ENCODE measurements at regions of chr5 and their contacts with region 1.

Region 1: DNA sequence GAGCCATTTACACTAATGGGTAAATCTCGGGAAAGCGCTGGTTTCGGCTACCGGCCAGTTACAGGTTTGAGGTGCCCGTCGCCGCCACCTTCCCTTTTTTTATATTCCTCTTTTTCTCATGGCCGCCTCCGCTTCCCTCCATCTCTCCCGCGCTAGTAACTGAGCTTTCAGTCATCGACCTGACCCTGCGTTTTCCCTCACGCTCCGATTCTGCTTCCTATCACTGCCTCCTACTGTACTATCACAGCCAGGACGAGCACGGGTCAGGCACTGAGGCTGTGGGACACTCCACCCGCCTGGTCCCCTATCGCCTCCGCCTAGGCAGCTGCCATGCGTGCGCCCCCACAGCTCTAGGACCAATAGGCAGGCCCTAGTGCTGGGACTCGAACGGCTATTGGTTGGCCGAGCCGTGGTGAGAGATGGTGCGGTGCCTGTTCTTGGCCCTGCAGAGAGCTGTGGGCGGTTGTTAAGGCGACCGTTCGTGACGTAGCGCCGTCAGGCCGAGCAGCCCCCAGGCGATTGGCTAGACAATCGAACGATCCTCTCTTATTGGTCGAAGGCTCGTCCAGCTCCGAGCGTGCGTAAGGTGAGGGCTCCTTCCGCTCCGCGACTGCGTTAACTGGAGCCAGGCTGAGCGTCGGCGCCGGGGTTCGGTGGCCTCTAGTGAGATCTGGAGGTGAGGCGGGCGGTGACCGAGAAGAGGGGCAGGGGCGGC is at the start of gene HMGCR:
- DNase-seq: peak; percentile 98
- H3K4me3 ChIP-seq: peak within 1 kb of the TSS; percentile 83
- H3K27ac ChIP-seq: peak within 1 kb of the TSS; percentile 78
- H3K4me1 ChIP-seq: peaks cover 47% of the 10 kb centered on the region
- H3K27me3 ChIP-seq: no peaks in the 10 kb centered on the region
- CTCF ChIP-seq: peak; percentile 11; the same call in 1 of the 2 replicates
- total RNA-seq, gene HMGCR: 55.0 and 86.8 TPM in 2 replicates

Region 2: GRCh38 chr5:73962801-73963425 is 1373.9 kb before region 1 on chr5:
- CTCF ChIA-PET with region 1: no interaction called
- POLR2A ChIA-PET with region 1: interaction called, 15 read pairs
- intact Hi-C with region 1: no loop called
- DNase-seq: peak; percentile 62 to 89
- H3K4me3 ChIP-seq: no peak overlapping the region
- H3K27ac ChIP-seq: peak overlapping the region; percentile 62
- H3K4me1 ChIP-seq: peaks cover 6% of the 10 kb centered on the region
- H3K27me3 ChIP-seq: no peaks in the 10 kb centered on the region
- CTCF ChIP-seq: no peak

Region 3: GRCh38 chr5:74766849-74767578 is 569.8 kb before region 1 on chr5 and contains the starts of genes GFM2 and NSA2:
- CTCF ChIA-PET with region 1: interaction called, 15 read pairs
- POLR2A ChIA-PET with region 1: interaction called, 12 read pairs
- intact Hi-C with region 1: no loop called
- DNase-seq: peak; percentile 83 to 88
- H3K4me3 ChIP-seq: peak within 1 kb of the TSS; percentile 83
- H3K27ac ChIP-seq: peak within 1 kb of the TSS; percentile 58
- H3K4me1 ChIP-seq: peaks cover 44% of the 10 kb centered on the region
- H3K27me3 ChIP-seq: no peaks in the 10 kb centered on the region
- CTCF ChIP-seq: no peak; the same call in 1 of the 2 replicates
- total RNA-seq, gene GFM2: 38.5 and 39.8 TPM in 2 replicates
- total RNA-seq, gene NSA2: 47.3 and 87.1 TPM in 2 replicates

Region 4: DNA sequence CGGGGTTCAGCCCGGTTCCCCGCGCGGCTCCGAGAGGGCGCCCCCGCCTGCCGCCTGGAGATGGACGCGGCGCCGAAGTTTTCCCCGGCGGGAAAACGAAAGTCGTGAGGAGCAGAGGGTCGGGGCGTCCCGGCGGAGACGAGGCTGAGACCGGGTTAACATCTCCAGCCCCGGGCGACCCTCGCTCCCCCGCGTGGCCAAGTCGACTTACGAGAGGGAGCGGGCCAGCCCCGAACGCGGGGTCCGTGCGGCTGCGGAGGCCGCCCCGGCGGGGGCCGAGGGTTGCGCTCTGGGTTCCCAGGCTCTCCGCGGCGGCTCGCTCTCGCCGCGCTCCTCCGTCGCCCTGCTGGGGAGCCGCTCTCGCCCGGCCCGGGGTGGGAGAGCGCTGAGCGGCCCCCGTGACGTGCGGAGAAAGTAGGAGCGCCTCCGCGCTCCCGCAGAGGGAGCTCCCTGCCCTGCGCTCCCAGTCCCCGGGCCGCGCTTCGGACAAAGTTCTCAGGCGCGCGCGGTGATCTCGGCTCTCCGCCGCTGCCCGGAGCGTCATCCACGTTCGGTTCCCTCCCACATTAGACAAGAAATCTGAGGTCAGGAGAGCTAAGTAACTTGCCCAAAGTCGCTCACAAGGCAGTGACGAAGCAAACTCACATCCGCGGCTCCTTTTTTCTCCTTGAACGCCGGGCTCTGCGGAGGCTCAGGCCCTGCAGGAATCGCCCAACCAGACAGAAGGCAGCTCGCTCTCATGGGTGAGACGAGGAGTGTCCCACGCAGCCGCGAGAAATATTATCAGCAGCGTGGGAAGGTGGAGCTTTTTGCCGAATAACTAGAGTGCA is 283.3 kb before region 1 on chr5:
- CTCF ChIA-PET with region 1: no interaction called
- POLR2A ChIA-PET with region 1: interaction called, 5 read pairs
- intact Hi-C with region 1: loop called (anchors 2 kb)
- DNase-seq: peak; percentile 60 to 66
- H3K4me3 ChIP-seq: peak overlapping the region; percentile 72
- H3K27ac ChIP-seq: 0 out of 2 replicates have a peak overlapping the region, but pooled peaks have one; percentile 9
- H3K4me1 ChIP-seq: peaks cover 20% of the 10 kb centered on the region
- H3K27me3 ChIP-seq: no peaks in the 10 kb centered on the region
- CTCF ChIP-seq: peak; percentile 27; the same call in 1 of the 2 replicates

Region 5: GRCh38 chr5:75265731-75266130 is 71.1 kb before region 1 on chr5:
- CTCF ChIA-PET with region 1: interaction called, 4 read pairs
- POLR2A ChIA-PET with region 1: no interaction called
- intact Hi-C with region 1: loop called (anchors 2 kb)
- DNase-seq: peak in 1 of 2 experiments; percentile 48
- H3K4me3 ChIP-seq: no peak overlapping the region
- H3K27ac ChIP-seq: no peak overlapping the region
- H3K4me1 ChIP-seq: no peaks in the 10 kb centered on the region
- H3K27me3 ChIP-seq: no peaks in the 10 kb centered on the region
- CTCF ChIP-seq: peak; percentile 78

Region 6: GRCh38 chr5:75381456-75381855 is 44.7 kb after region 1 on chr5:
- CTCF ChIA-PET with region 1: no interaction called
- POLR2A ChIA-PET with region 1: no interaction called
- intact Hi-C with region 1: no loop called
- DNase-seq: no peak
- H3K4me3 ChIP-seq: no peak overlapping the region
- H3K27ac ChIP-seq: no peak overlapping the region
- H3K4me1 ChIP-seq: no peaks in the 10 kb centered on the region
- H3K27me3 ChIP-seq: no peaks in the 10 kb centered on the region
- CTCF ChIP-seq: no peak

Region 7: DNA sequence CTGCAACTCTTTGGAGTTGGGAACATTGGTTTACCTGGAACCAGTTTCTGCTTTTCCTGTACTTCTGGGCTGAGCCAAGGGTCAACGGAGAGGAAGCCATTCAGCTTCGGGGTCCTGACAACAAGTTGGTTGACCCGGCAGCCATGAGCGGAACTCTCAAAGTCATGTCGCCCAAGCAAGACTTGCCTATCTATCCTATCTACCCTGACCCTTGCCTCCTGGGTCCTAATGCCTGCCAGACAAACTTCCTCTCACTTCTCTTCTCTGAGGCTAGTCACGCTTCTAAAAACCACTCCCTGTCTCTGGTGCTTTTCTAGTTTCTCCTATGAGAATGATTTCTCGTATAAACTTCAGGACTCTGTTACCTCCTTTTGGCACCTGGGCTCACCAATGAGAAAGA is 1571.4 kb after region 1 on chr5:
- CTCF ChIA-PET with region 1: no interaction called
- POLR2A ChIA-PET with region 1: interaction called, 15 read pairs
- intact Hi-C with region 1: no loop called
- DNase-seq: no peak
- H3K4me3 ChIP-seq: no peak overlapping the region
- H3K27ac ChIP-seq: no peak overlapping the region
- H3K4me1 ChIP-seq: no peaks in the 10 kb centered on the region
- H3K27me3 ChIP-seq: no peaks in the 10 kb centered on the region
- CTCF ChIP-seq: no peak

Measured in PC-9 (cell line).